ENCODE measurements at regions of chr6 and their contacts with region 1.

Region 1: DNA sequence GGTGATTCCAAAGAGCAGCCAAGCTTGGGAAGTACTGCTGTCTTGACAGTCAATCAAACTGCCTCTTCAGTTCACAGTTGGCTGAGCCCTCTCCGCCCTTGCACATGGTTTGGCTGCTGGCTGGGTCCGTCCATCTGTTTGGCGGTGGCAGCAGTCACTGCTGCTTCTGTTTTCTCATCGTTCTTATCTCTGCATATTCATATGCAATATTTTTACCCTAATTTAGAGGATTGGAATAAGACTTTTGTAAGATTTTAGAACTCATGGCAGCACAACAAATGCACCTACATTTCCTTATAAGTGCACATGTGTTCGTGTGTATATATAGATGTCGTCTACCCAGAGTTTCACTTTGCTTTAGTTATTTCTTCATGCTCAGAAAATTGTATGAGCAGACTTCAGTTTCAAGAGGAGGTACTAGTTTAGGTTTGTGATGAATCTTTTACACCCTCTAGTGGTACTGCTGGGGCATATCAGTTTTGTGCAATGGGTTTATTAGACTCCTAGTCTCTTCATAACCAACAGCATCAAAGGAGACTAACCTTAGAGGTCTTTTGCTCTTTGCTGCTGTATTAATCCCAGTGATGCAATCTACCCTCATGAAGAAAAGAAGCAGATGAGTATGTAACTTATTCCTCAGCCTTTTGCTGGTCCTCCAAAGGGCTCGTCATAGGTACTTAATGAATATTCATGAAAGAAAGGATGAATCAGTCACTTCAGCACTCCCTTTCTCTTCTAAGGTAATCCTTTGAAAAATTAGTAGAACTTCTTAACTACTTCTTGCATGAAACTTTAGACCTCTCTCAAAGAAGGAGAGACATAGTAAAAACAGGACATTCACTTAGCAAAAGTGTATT is 44.3 kb downstream of the KHDC1L start:
- DNase-seq: no peak
- H3K4me3 ChIP-seq: no peak overlapping the region
- H3K27ac ChIP-seq: no peak overlapping the region
- H3K4me1 ChIP-seq: no peaks in the 10 kb centered on the region
- H3K27me3 ChIP-seq: no peaks in the 10 kb centered on the region
- CTCF ChIP-seq: peak; percentile 49 to 72 (median 63)
- POLR2A ChIP-seq: no peak

Region 2: GRCh38 chr6:72411872-72412708 is 768.9 kb before region 1 on chr6:
- intact Hi-C with region 1: loop called (anchors 10 kb)
- DNase-seq: peak; percentile 85
- H3K4me3 ChIP-seq: no peak overlapping the region
- H3K27ac ChIP-seq: no peak overlapping the region
- H3K4me1 ChIP-seq: no peaks in the 10 kb centered on the region
- H3K27me3 ChIP-seq: no peaks in the 10 kb centered on the region
- CTCF ChIP-seq: peak; percentile 99 to 100 (median 100)
- POLR2A ChIP-seq: no peak

Region 3: DNA sequence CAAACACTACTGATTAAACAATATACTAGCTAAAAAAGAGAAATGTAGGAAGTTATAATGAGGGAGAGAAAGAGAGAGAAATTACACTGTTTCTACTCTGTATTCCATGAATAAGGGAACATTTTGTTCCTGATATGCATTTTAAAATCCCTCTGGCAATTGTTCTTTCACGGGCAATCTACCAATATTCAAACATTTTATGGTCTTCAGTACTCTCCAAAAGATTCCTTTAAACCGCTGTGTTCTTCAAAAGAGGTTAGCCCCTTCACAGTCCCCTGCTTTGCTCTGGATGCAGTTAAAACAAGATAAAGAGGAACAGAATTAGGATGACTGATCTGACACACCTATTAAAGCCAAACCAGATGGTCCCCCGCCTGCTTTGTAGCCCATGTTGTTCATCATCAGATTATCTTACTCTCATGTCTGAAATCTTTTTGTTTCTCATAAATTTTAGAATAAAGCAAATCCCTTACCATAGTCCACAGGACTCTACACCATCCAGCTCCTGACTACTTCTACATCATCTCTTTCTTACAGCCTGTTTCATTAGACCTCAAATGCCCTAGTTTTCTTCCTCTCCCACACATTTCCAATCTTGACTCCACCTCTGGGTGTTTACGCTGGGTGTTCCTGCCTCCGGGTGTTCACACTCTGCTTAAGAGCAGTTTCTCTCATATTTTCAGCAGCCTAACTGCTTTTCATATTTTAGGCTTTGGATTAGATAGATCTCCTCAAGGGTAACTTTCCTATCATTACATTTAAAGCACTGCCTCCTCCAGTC is 1625.1 kb after region 1 on chr6:
- intact Hi-C with region 1: no loop called
- DNase-seq: peak; percentile 57
- H3K4me3 ChIP-seq: no peak overlapping the region
- H3K27ac ChIP-seq: peak overlapping the region; percentile 80 to 86
- H3K4me1 ChIP-seq: peaks cover 12% of the 10 kb centered on the region
- H3K27me3 ChIP-seq: no peaks in the 10 kb centered on the region
- CTCF ChIP-seq: no peak
- POLR2A ChIP-seq: no peak